HCT116 (cell line): ENCODE measurements at regions of chr17 and their contacts with region 1.

Region 1: DNA sequence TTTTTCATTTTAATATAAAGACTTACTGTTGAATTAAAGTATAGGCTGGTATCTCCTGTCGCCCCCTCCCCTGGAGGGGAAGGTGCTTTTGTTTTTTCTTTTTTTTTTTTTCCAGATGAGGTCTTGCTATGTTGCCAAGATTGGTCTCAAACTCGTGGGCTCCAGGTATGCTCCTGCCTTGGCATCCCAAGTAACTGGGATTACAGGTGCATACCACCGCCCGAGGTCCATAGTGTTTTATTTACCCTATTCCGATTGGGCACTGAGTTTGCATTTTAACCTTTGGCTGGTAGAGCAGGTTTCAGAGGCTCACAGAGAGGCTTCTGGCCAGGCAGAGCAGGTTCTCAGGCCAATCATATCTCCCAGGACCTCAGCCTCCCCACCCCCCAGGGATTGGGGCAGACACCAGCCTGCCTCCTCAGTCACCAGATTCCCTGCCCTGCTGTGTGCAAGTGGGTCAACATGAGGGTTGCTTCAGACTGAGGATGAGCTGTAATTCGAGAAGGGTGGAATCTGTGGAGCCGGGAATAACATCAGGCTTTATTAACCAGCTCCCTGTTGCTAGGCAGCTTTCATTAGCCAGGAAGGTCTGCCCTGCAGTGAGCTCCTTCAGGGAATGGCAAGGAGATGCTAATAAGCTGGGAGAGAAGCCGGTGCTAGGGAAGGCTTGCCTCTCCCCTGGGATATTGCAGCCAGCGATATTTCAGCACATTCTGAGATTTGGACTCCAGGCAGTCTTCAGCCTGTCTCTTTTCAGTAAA is 10.4 kb downstream of the SGSM2 start:
- DNase-seq: no peak
- ATAC-seq: peak; percentile 69
- H3K4me3 ChIP-seq: no peak overlapping the region
- H3K27ac ChIP-seq: no peak overlapping the region; the same call in 1 of the 2 replicates
- H3K4me1 ChIP-seq: peaks cover 24 to 35% of the 10 kb centered on the region in 2 experiments
- H3K27me3 ChIP-seq: no peaks in the 10 kb centered on the region
- CTCF ChIP-seq: no peak
- POLR2A ChIP-seq: no peak
- RAD21 ChIP-seq: no peak

Region 2: DNA sequence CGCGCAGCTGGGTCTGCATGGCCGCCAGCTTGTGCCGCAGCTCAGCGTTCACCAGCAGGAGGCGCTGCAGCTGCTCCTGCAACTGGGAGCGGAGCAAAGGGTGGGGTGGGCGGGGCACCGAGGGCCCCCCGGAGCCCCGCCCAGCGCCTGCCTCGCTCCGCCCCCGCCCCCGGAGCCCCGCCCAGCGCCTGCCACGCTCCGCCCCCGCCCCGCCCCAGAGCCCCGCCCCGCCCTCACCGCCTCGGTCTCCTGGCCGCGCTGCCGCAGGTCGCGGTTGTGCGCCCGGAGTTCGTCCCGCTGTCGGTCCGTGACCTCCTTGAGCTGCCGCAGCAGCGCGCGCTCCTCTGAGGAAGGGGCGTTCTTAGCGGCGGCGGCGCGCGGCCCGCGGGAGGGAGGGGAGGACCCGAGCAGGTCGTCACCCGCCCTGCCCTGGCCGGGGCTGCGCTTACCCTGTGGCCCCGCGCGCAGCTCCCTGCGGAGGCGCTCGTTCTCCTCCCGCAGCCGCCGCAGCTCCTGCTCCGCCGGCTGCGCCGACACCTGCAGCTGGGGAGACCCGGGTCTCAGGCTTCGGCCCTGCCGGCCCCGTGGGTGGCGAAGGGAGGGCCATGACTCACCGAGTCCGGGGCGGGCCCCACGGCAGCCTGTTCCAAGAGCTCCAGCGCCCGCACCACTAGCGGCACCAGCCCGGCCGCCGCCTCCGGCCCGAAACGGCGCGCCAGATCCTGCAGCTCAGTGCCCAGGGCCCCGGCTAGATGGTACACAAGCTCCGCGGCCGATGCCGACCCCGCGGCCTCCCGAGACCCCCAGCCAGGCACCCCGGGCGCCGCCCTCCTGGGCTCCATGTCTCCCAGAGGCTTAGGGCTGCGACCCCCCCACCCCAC is 698.5 kb before region 1 on chr17:
- CTCF ChIA-PET with region 1: no interaction called
- POLR2A ChIA-PET with region 1: no interaction called
- RAD21 ChIA-PET with region 1: no interaction called
- intact Hi-C with region 1: no loop called
- DNase-seq: peak; percentile 89
- ATAC-seq: peak; percentile 76
- H3K4me3 ChIP-seq: peak overlapping the region; percentile 40 to 72
- H3K27ac ChIP-seq: peak overlapping the region; percentile 94
- H3K4me1 ChIP-seq: peaks cover 23 to 48% of the 10 kb centered on the region in 2 experiments
- H3K27me3 ChIP-seq: no peaks in the 10 kb centered on the region
- CTCF ChIP-seq: peak in 2 of 3 experiments; percentile 86 to 97; a peak in 5 of 6 replicates
- POLR2A ChIP-seq: no peak
- RAD21 ChIP-seq: peak; percentile 61

Region 3: GRCh38 chr17:2336215-2336851 is 11.4 kb before region 1 on chr17 and contains the start of gene TSR1:
- CTCF ChIA-PET with region 1: interaction called, 14 read pairs
- POLR2A ChIA-PET with region 1: interaction called, 5 read pairs
- RAD21 ChIA-PET with region 1: no interaction called
- intact Hi-C with region 1: no loop called
- DNase-seq: peak; percentile 74
- ATAC-seq: peak; percentile 81
- H3K4me3 ChIP-seq: peak within 1 kb of the TSS; percentile 82 to 99
- H3K27ac ChIP-seq: peak within 1 kb of the TSS; percentile 86
- H3K4me1 ChIP-seq: peaks cover 2 to 29% of the 10 kb centered on the region in 2 experiments; a peak in 3 of 4 replicates
- H3K27me3 ChIP-seq: no peaks in the 10 kb centered on the region
- CTCF ChIP-seq: no peak
- POLR2A ChIP-seq: peak; percentile 96
- RAD21 ChIP-seq: no peak
- total RNA-seq, gene TSR1: 77.2 TPM

Region 4: DNA sequence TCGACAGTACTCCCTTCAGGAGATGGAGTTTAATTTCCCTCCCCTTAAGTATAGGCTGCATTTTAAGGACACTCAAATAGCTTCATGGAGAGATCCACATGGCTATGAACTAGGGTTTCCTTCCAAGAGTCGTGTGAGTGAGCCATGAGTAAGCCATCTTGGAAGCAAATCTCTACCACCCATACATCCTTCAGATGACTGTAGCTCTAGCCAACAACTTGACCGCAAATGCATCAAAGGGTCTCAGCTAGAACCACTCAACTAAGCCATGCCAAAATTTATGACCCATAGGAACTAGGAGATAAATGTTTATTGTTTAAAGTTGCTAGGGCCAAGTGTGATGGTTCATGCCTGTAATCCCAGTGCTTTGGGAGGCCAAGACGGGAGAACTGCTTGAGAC is 120.5 kb after region 1 on chr17:
- CTCF ChIA-PET with region 1: no interaction called
- POLR2A ChIA-PET with region 1: no interaction called
- RAD21 ChIA-PET with region 1: no interaction called
- intact Hi-C with region 1: no loop called
- DNase-seq: no peak
- ATAC-seq: no peak
- H3K4me3 ChIP-seq: no peak overlapping the region
- H3K27ac ChIP-seq: no peak overlapping the region
- H3K4me1 ChIP-seq: no peaks in the 10 kb centered on the region
- H3K27me3 ChIP-seq: no peaks in the 10 kb centered on the region
- CTCF ChIP-seq: no peak
- POLR2A ChIP-seq: no peak
- RAD21 ChIP-seq: no peak